ENCODE measurements at regions of chr2 and their contacts with region 1.

Region 1: GRCh38 chr2:54704688-54705605 is 18.5 kb upstream of the EML6 start:
- DNase-seq: peak; percentile 74
- ATAC-seq: peak; percentile 55
- H3K4me3 ChIP-seq: no peak overlapping the region
- H3K4me3 Mint-ChIP-seq: no peak overlapping the region
- H3K27ac ChIP-seq: no peak overlapping the region
- H3K27ac Mint-ChIP-seq: no peak overlapping the region
- H3K4me1 ChIP-seq: peaks cover 14 to 15% of the 10 kb centered on the region in 2 donors
- H3K4me1 Mint-ChIP-seq: peaks cover 11% of the 10 kb centered on the region
- H3K27me3 ChIP-seq: peaks cover 0 to 16% (median 12%) of the 10 kb centered on the region in 4 experiments
- H3K27me3 Mint-ChIP-seq: peaks cover 11% of the 10 kb centered on the region
- CTCF ChIP-seq: peak; percentile 80

Region 2: GRCh38 chr2:53939656-53940055 is 765.3 kb before region 1 on chr2:
- CTCF ChIA-PET with region 1: no interaction called
- POLR2A ChIA-PET with region 1: no interaction called
- intact Hi-C with region 1: loop called (anchors 10 kb)
- DNase-seq: no peak
- ATAC-seq: no peak
- H3K4me3 ChIP-seq: peak overlapping the region in 1 of 5 experiments; percentile 27
- H3K4me3 Mint-ChIP-seq: peak overlapping the region; percentile 29
- H3K27ac ChIP-seq: peak overlapping the region; percentile 19 to 51
- H3K27ac Mint-ChIP-seq: no peak overlapping the region
- H3K4me1 ChIP-seq: peaks cover 22 to 36% of the 10 kb centered on the region in 2 donors
- H3K4me1 Mint-ChIP-seq: peaks cover 33% of the 10 kb centered on the region
- H3K27me3 ChIP-seq: no peaks in the 10 kb centered on the region
- H3K27me3 Mint-ChIP-seq: no peaks in the 10 kb centered on the region
- CTCF ChIP-seq: no peak

Region 3: DNA sequence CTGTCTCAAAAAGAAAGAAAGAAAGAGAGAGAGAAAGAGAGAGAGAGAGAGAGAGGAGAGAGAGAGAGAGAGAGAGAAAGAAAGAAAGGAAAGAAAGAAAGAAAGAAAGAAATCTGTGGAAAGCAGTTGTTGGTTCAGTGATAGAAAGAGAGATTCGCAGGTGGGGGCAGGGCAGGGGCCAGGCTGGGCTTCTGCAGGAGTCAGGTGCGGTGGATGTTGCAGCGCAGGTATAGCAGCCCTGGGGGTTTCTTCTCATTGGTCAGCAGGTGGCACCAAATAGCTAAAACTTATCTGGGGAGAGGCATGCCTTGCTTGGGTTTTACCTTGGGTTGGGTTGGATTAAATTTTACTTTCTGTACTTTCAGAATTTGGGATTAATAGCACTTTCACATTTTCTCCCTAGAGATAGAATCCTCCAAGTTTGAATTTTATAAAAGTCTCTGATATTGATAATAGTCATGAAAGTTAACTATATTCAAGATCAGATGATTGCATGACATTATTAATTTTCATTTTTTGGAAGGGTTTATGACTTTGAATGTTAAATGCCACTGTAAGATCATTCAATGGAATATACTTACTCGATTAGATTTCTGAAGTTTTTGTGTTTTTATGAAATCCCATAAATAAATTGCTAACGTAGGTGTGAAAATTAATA is 182.2 kb before region 1 on chr2:
- CTCF ChIA-PET with region 1: interaction called, 244 read pairs
- POLR2A ChIA-PET with region 1: no interaction called
- intact Hi-C with region 1: loop called (anchors 1 kb)
- DNase-seq: peak; percentile 84
- ATAC-seq: peak; percentile 95
- H3K4me3 ChIP-seq: no peak overlapping the region
- H3K4me3 Mint-ChIP-seq: no peak overlapping the region
- H3K27ac ChIP-seq: no peak overlapping the region
- H3K27ac Mint-ChIP-seq: peak overlapping the region; percentile 72
- H3K4me1 ChIP-seq: no peaks in the 10 kb centered on the region
- H3K4me1 Mint-ChIP-seq: peaks cover 9% of the 10 kb centered on the region
- H3K27me3 ChIP-seq: no peaks in the 10 kb centered on the region
- H3K27me3 Mint-ChIP-seq: peaks cover 10% of the 10 kb centered on the region
- CTCF ChIP-seq: peak; percentile 85

Region 4: DNA sequence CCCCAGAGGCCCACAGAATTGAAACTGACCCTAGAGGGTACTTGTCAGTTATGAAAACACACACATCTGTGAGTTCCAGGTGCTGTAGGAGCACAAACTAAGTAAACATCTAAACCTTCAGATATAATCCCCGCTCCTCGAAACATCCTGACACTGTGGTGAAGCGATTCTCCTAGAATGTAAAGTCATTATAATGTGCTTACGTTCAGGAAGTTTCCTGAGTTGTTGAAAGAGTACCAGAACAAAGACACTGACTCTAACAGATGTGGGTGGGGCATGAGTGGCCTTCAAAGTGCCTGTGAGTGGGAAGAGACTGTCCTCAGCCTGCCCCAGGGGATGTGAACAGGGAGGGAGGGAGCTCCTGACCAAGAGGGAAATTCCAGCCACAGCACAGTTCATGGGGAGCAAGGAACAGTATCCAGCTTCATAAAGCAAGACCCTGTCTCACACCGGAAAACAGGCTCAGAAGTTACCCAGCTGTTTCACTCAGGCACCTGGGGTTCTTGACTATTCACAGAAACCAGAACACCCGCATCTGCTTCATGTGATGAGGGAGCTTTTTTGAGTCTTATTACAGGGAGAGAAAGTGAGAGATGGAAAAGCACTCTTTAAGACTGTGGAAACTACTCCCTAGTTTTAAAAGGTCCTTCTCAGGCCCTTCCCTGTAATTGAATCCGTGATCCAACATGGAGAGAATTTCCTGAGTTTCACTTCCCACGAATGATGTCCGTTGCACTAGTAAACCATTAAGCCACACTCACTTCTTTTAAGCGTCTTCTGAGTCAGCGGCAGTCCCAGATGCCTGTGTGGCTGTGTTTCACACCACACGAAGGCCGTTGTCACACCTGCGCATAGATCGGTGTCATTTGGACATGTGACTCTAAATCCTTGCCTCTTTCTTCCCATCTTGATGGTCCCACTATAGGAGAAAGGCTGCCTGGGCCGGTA is 70.1 kb before region 1 on chr2:
- CTCF ChIA-PET with region 1: interaction called, 11 read pairs
- POLR2A ChIA-PET with region 1: no interaction called
- intact Hi-C with region 1: no loop called
- DNase-seq: peak; percentile 68
- ATAC-seq: peak; percentile 65
- H3K4me3 ChIP-seq: no peak overlapping the region
- H3K4me3 Mint-ChIP-seq: peak overlapping the region; percentile 67
- H3K27ac ChIP-seq: peak overlapping the region; percentile 46 to 85
- H3K27ac Mint-ChIP-seq: peak overlapping the region; percentile 94
- H3K4me1 ChIP-seq: peaks cover 35 to 42% of the 10 kb centered on the region in 2 donors
- H3K4me1 Mint-ChIP-seq: peaks cover 60% of the 10 kb centered on the region
- H3K27me3 ChIP-seq: no peaks in the 10 kb centered on the region
- H3K27me3 Mint-ChIP-seq: no peaks in the 10 kb centered on the region
- CTCF ChIP-seq: no peak

Region 5: GRCh38 chr2:54665436-54665856 is 39.5 kb before region 1 on chr2:
- CTCF ChIA-PET with region 1: interaction called, 294 read pairs
- POLR2A ChIA-PET with region 1: no interaction called
- intact Hi-C with region 1: loop called (anchors 1 kb)
- DNase-seq: peak; percentile 65
- ATAC-seq: peak; percentile 60
- H3K4me3 ChIP-seq: no peak overlapping the region
- H3K4me3 Mint-ChIP-seq: no peak overlapping the region
- H3K27ac ChIP-seq: no peak overlapping the region
- H3K27ac Mint-ChIP-seq: no peak overlapping the region
- H3K4me1 ChIP-seq: no peaks in the 10 kb centered on the region
- H3K4me1 Mint-ChIP-seq: no peaks in the 10 kb centered on the region
- H3K27me3 ChIP-seq: no peaks in the 10 kb centered on the region
- H3K27me3 Mint-ChIP-seq: no peaks in the 10 kb centered on the region
- CTCF ChIP-seq: peak; percentile 76

Region 6: GRCh38 chr2:54680397-54681041 is 24.4 kb before region 1 on chr2:
- CTCF ChIA-PET with region 1: interaction called, 42 read pairs
- POLR2A ChIA-PET with region 1: interaction called, 3 read pairs
- intact Hi-C with region 1: no loop called
- DNase-seq: no peak
- ATAC-seq: no peak
- H3K4me3 ChIP-seq: no peak overlapping the region
- H3K4me3 Mint-ChIP-seq: no peak overlapping the region
- H3K27ac ChIP-seq: no peak overlapping the region
- H3K27ac Mint-ChIP-seq: no peak overlapping the region
- H3K4me1 ChIP-seq: peaks cover 8 to 16% of the 10 kb centered on the region in 2 donors
- H3K4me1 Mint-ChIP-seq: peaks cover 26% of the 10 kb centered on the region
- H3K27me3 ChIP-seq: no peaks in the 10 kb centered on the region
- H3K27me3 Mint-ChIP-seq: peaks cover 5% of the 10 kb centered on the region
- CTCF ChIP-seq: no peak

Region 7: GRCh38 chr2:54838585-54839035 is 133.7 kb after region 1 on chr2:
- CTCF ChIA-PET with region 1: interaction called, 76 read pairs
- POLR2A ChIA-PET with region 1: no interaction called
- intact Hi-C with region 1: loop called (anchors 1 kb)
- DNase-seq: peak; percentile 78
- ATAC-seq: peak; percentile 83
- H3K4me3 ChIP-seq: no peak overlapping the region
- H3K4me3 Mint-ChIP-seq: no peak overlapping the region
- H3K27ac ChIP-seq: no peak overlapping the region
- H3K27ac Mint-ChIP-seq: peak overlapping the region; percentile 46
- H3K4me1 ChIP-seq: peaks cover 0 to 4% of the 10 kb centered on the region in 2 donors
- H3K4me1 Mint-ChIP-seq: peaks cover 4% of the 10 kb centered on the region
- H3K27me3 ChIP-seq: no peaks in the 10 kb centered on the region
- H3K27me3 Mint-ChIP-seq: no peaks in the 10 kb centered on the region
- CTCF ChIP-seq: peak; percentile 97

Region 8: DNA sequence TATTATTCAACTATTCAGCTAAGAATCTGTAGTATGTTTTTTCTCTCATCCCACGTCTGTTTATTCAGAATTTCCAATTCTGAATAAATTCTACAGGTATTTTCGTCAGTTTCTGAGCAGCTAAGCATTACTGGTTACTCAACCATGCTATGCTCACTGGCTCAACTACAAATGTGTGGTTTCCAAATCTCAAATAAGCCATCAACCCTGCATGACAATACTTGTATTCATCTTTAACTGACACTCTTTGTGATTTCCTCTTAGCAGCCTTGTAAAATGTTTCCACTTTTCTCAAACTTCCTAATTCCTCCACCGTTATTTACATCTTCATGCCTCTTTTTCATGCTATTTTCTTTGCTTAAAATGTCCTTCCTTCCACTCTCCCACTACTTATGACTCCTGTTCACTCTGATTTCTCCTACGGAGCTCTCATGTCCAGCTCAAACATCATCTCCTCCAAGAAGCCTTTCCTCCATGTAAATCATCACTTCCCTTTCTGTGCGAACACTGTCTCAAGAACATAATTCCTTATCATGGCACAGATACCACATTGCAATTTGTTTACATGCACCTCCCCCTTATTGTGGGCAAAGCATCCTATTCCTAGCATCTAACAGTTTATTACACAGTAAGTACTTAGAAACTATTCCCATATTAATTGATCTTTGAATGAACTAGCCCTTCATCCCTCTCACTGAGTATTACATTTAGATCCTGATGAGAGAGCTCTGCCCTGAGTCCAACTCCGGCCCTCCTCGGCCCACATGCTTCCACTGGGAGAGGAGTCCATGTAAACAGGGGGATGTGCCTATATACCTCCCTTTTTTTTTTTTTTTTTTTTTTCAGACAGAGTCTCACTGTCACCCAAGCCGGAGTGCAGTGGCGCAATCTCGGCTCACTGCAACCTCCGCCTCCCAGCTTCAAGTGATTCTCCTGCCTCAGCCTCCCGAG is 704.2 kb after region 1 on chr2:
- CTCF ChIA-PET with region 1: no interaction called
- POLR2A ChIA-PET with region 1: no interaction called
- intact Hi-C with region 1: no loop called
- DNase-seq: no peak
- ATAC-seq: no peak
- H3K4me3 ChIP-seq: no peak overlapping the region
- H3K4me3 Mint-ChIP-seq: no peak overlapping the region
- H3K27ac ChIP-seq: peak overlapping the region in 1 of 2 donors; percentile 3
- H3K27ac Mint-ChIP-seq: no peak overlapping the region
- H3K4me1 ChIP-seq: peaks cover 0 to 7% of the 10 kb centered on the region in 2 donors
- H3K4me1 Mint-ChIP-seq: peaks cover 9% of the 10 kb centered on the region
- H3K27me3 ChIP-seq: no peaks in the 10 kb centered on the region
- H3K27me3 Mint-ChIP-seq: no peaks in the 10 kb centered on the region
- CTCF ChIP-seq: no peak